ENCODE measurements at regions of chr2 and their contacts with region 1.

Region 1: DNA sequence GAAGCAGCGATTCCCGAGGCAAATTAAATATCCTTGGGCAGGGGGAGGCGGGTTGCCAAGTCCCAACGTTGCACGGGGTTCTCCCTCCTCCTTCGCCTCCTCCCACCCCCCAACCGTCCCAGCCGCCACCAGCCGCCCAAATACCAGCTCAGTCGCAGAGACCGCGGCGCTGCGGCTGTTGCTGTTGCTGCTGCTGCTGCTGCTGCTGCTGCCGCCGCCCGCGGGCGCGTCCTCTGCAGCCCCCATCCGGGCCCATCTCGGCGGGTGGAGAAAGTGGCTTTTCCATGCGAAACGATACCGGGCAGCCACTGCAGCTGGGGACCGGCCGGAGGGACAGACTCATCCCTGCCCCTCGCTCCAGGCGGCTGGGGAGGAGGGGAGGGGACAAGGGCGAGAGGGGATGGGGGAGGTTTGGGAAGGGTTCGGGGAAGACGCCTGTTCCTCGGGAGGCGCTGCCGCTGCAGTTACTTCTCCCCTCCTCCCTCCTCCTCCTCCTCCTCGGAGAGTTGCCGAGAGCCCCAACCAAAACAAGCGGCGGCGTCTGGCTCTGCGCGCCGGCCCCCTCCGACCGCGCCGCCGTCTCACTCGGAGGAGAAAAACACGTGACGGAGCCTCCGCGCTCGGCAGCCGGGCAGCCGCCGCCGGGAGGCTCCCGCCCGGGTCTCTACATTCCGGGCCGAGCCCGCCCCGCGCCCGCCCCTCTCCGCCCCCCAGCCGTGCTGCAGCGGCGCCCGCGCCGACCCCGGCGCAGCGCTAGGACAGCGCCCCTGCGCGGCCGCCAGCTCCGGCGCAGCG is at the start of gene IRS1:
- DNase-seq: peak; percentile 75
- ATAC-seq: peak; percentile 13
- H3K4me3 ChIP-seq: peak within 1 kb of the TSS; percentile 88
- H3K27ac ChIP-seq: peak within 1 kb of the TSS; percentile 88
- H3K4me1 ChIP-seq: peaks cover 36% of the 10 kb centered on the region
- H3K27me3 ChIP-seq: no peaks in the 10 kb centered on the region
- CTCF ChIP-seq: no peak
- total RNA-seq, gene IRS1: 38.8 and 43.8 TPM in 2 replicates

Region 2: DNA sequence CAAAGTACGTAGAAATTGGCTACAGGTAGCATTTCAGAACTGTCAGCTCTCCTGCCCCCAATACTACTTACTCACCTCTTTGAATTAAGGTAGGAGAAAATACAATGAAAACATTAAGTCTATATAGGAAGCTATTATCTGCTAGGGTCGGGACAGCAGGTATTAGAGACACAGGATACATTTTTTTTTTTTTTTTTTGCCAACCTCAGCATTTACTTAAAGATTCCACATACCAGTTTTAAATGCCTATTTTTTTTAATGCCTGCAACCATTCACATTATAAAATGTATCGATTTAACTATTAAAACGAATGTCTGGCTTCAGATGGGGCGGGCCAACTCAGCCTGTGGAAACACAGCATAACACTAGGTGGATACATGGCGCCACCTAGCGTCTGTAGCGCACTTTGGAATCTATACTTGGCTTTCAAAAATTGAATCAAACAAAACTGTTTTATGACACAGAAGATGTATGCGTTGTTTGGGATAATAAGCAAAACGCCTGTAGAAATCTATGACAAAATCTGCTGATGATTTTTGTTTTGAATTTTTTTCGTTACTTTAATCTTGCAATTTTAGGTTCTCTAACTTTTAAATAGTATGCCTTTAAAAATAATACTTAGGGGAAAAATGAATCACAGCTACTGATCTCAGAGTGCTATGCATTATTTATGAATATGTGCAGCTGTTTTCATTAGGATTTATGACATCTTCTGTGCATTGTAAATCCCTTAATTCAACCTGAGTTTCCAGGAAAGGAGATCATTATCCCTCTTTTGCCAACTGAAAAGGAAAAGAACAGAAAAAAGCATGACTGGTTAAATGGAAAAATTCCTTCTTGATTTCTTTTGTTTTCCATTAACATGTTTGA is 1138.9 kb before region 1 on chr2:
- CTCF ChIA-PET with region 1: interaction called, 30 read pairs
- POLR2A ChIA-PET with region 1: interaction called, 7 read pairs
- intact Hi-C with region 1: no loop called
- DNase-seq: peak; percentile 84
- ATAC-seq: peak; percentile 89
- H3K4me3 ChIP-seq: no peak overlapping the region
- H3K27ac ChIP-seq: no peak overlapping the region
- H3K4me1 ChIP-seq: no peaks in the 10 kb centered on the region
- H3K27me3 ChIP-seq: no peaks in the 10 kb centered on the region
- CTCF ChIP-seq: peak; percentile 92

Region 3: DNA sequence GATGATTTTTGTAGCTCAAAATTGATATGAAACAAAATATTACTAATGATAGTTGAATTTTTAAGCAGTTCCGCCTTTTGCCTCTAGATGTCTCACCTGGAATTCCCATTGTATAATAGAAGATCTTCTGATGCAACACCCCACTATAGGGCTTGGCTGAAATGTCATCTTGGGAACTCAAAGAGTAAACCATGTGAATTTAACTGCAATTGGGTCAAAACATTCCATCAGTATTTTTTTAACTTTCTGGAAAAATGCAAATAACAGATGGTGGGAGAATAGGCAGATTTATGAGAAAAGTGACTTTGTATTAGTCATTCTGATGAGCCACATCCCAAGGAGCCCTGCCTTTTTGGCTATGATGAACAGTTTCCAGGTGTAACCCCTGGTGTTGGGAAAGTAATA is 909.9 kb before region 1 on chr2:
- CTCF ChIA-PET with region 1: interaction called, 3 read pairs
- POLR2A ChIA-PET with region 1: no interaction called
- intact Hi-C with region 1: loop called (anchors 1 kb)
- DNase-seq: peak; percentile 75
- ATAC-seq: peak; percentile 94
- H3K4me3 ChIP-seq: no peak overlapping the region
- H3K27ac ChIP-seq: peak overlapping the region; percentile 66
- H3K4me1 ChIP-seq: peaks cover 23% of the 10 kb centered on the region
- H3K27me3 ChIP-seq: no peaks in the 10 kb centered on the region
- CTCF ChIP-seq: peak; percentile 84

Region 4: DNA sequence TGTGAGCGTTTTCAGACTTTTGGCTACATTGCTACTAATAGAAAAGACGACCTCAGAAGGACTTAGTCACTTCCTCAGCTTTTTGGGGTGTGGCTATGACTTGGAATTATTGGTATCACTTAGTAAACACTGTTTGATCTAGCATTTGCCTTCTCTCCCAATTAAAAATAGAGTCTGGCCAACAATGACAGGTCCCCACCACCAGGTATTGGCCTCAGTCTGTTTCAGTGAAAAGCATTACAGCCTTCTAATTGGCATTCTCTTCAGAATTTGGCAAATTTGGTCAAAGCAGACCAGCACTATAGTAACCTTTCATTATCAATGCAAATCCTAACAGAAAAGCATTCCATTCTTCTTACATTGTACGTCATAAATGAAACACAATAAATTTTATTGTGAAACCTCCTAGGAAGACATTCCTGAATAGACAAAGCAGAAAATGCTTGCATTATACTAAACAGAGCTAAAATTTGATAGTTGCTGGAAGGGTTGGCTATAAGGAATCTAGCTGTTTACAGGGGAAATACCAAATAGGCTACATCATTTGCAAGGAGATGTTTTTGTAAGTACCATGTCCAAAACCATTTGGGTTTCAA is 613.7 kb before region 1 on chr2:
- CTCF ChIA-PET with region 1: no interaction called
- POLR2A ChIA-PET with region 1: no interaction called
- intact Hi-C with region 1: loop called (anchors 2 kb)
- DNase-seq: peak; percentile 92
- ATAC-seq: peak; percentile 83
- H3K4me3 ChIP-seq: peak overlapping the region; percentile 57
- H3K27ac ChIP-seq: peak overlapping the region; percentile 95
- H3K4me1 ChIP-seq: peaks cover 46% of the 10 kb centered on the region
- H3K27me3 ChIP-seq: no peaks in the 10 kb centered on the region
- CTCF ChIP-seq: no peak

Region 5: DNA sequence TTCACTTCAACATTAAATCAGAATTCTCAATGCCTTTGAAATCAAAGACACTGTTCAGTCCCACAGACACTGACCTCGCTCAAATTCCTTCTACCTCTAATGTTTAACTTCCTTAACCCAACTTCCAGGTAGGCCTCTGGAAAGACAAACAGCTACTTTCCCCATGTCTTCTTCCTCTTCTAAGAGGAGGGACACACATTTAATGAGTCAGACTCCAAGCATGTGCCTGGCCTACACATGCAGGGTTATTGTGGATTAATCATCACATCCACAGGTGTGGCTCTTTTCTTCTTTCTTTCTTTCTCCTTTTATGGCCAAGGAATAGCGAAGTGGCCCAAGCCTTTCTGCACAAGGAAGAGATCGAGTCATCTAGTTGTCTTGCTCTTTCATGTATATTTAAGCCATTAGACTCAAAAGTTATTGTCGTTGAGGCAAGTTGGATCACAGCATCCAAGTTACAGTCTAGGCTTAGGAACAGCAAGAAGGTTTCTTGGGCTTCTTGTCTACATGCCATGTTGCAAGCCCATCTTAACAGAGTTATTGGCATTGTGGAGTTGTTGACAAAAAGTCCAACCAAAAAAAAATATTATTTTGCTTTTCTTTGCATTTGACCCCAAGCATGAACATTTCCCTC is 387.5 kb before region 1 on chr2:
- CTCF ChIA-PET with region 1: no interaction called
- POLR2A ChIA-PET with region 1: no interaction called
- intact Hi-C with region 1: loop called (anchors 5 kb)
- DNase-seq: peak; percentile 96
- ATAC-seq: peak; percentile 98
- H3K4me3 ChIP-seq: no peak overlapping the region
- H3K27ac ChIP-seq: peak overlapping the region; percentile 78
- H3K4me1 ChIP-seq: peaks cover 21% of the 10 kb centered on the region
- H3K27me3 ChIP-seq: no peaks in the 10 kb centered on the region
- CTCF ChIP-seq: no peak

Measured in PC-3 (cell line).